ENCODE measurements at regions of chr1 and their contacts with region 1.

Region 1: DNA sequence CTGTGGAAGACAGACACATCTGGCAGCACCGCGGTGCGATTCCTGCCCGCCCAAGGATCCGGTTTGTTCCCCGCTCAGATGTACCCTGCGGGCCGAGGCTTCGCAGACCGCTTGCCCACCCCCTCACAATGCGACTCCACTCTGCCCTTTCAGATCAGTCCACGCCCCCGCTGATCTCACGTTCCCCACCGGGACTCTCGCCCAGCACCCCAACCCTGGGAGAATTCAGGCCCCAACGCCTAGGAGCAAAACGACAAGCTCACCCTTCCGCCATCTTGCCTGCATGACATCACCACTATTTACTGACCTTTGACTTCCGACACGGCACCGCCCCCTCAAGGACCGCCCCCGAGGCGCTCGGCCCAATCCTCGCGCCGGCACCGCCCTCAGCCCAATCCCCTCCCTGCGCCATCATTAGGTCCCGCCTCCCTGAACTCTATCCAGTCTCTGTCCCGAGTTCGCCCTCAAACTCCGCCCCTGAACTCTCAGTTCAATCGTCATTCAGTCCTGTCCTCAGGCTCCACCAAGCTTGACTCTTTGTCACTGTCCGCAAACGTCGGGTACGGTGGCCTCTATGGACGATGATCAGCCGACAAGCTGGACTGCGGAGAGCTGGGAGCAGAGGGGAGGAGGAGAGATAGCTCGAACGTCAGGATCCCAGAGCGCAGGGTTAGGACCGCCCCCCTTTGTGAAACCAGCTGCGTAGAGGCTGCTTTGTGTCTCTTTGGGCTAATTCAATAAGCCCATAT is at the start of gene BSDC1:
- DNase-seq: peak; percentile 98 to 99 (median 98)
- H3K4me3 ChIP-seq: peak within 1 kb of the TSS; percentile 84 to 94 (median 91)
- H3K4me3 Mint-ChIP-seq: peak within 1 kb of the TSS; percentile 98 to 100
- H3K27ac ChIP-seq: peak within 1 kb of the TSS; percentile 67 to 90
- H3K27ac Mint-ChIP-seq: peak within 1 kb of the TSS; percentile 99 to 100 (median 99)
- H3K4me1 ChIP-seq: peaks cover 24 to 32% of the 10 kb centered on the region in 2 donors
- H3K4me1 Mint-ChIP-seq: peaks cover 21% of the 10 kb centered on the region
- H3K27me3 ChIP-seq: no peaks in the 10 kb centered on the region
- H3K27me3 Mint-ChIP-seq: peaks cover 0 to 2% (median 0%) of the 10 kb centered on the region in 3 donors
- CTCF ChIP-seq: no peak
- polyA plus RNA-seq, gene BSDC1: 19.0 to 42.4 (median 23.7) TPM

Region 2: DNA sequence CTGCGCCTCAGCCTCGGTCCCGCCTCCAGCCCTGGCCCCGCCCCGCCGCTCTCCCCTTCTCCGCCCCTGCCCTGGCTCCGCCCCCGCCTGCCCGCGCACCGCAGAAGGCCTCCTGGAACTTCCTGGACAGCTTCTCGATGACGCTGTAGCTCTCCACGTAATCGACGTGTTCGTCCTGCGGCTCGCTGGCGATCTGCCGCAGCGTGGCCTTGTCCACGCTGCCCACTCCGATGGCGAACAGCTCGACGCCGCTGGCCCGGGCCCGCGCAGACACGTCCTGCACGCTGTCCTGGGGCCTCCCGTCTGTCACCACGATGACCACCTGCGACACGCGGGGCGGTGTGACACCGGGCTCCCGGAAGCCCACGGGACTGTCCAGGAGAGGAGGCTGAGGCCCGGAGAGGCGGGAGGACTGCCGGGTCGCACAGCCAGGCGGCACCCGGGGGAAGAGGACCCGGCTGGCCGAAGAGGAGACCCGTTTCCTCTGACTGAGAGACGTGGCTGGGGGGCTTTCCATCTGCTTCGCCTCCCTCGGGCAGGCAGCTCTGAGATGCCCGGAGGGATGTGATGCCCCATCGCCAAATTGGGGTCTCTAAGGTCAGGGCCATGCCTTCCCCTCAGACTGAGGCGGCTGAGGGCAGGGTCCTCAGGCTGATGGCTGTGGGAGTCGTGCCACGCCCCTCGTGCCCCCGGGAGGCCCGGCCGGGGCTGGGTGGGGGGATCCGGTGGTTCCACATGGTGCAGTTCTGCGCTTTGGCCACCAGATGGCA is 1675.5 kb before region 1 on chr1:
- intact Hi-C with region 1: loop called in 1 of 2 experiments (anchors 10 kb)
- DNase-seq: peak; percentile 97 to 99 (median 98)
- H3K4me3 ChIP-seq: peak overlapping the region; percentile 0 to 69 (median 49)
- H3K4me3 Mint-ChIP-seq: peak overlapping the region; percentile 39 to 58
- H3K27ac ChIP-seq: peak overlapping the region; percentile 95 to 97
- H3K27ac Mint-ChIP-seq: peak overlapping the region; percentile 87 to 97 (median 93)
- H3K4me1 ChIP-seq: peaks cover 27 to 33% of the 10 kb centered on the region in 2 donors
- H3K4me1 Mint-ChIP-seq: peaks cover 24% of the 10 kb centered on the region
- H3K27me3 ChIP-seq: no peaks in the 10 kb centered on the region
- H3K27me3 Mint-ChIP-seq: peaks cover 0 to 3% (median 2%) of the 10 kb centered on the region in 3 donors
- CTCF ChIP-seq: peak; percentile 100

Region 3: GRCh38 chr1:32221980-32222755 is 172.1 kb before region 1 on chr1 and contains the starts of genes EIF3I and TMEM234:
- intact Hi-C with region 1: loop called in 1 of 2 experiments (anchors 10 kb)
- DNase-seq: peak; percentile 91 to 96 (median 96)
- H3K4me3 ChIP-seq: peak within 1 kb of the TSS; percentile 53 to 98 (median 82)
- H3K4me3 Mint-ChIP-seq: peak within 1 kb of the TSS; percentile 97 to 98
- H3K27ac ChIP-seq: peak within 1 kb of the TSS; percentile 65 to 99
- H3K27ac Mint-ChIP-seq: peak within 1 kb of the TSS; percentile 97 to 100 (median 98)
- H3K4me1 ChIP-seq: peaks cover 18 to 28% of the 10 kb centered on the region in 2 donors
- H3K4me1 Mint-ChIP-seq: peaks cover 28% of the 10 kb centered on the region
- H3K27me3 ChIP-seq: no peaks in the 10 kb centered on the region
- H3K27me3 Mint-ChIP-seq: peaks cover 0 to 2% (median 2%) of the 10 kb centered on the region in 3 donors
- CTCF ChIP-seq: no peak
- polyA plus RNA-seq, gene EIF3I: 126 to 162 (median 151) TPM
- polyA plus RNA-seq, gene TMEM234: 12.8 to 22.0 (median 14.5) TPM

Region 4: GRCh38 chr1:32335790-32336590 is 58.3 kb before region 1 on chr1 and contains the start of gene MARCKSL1:
- intact Hi-C with region 1: loop called in 1 of 2 experiments (anchors 5 kb)
- DNase-seq: peak; percentile 63 to 70 (median 64)
- H3K4me3 ChIP-seq: peak within 1 kb of the TSS; percentile 23 to 76 (median 70)
- H3K4me3 Mint-ChIP-seq: peak within 1 kb of the TSS; percentile 86 to 93
- H3K27ac ChIP-seq: peak within 1 kb of the TSS; percentile 94 to 100
- H3K27ac Mint-ChIP-seq: peak within 1 kb of the TSS; percentile 95 to 99 (median 99)
- H3K4me1 ChIP-seq: peaks cover 51 to 66% of the 10 kb centered on the region in 2 donors
- H3K4me1 Mint-ChIP-seq: peaks cover 54% of the 10 kb centered on the region
- H3K27me3 ChIP-seq: peaks cover 7 to 15% of the 10 kb centered on the region in 2 donors
- H3K27me3 Mint-ChIP-seq: peaks cover 24 to 27% (median 24%) of the 10 kb centered on the region in 3 donors
- CTCF ChIP-seq: no peak
- polyA plus RNA-seq, gene MARCKSL1: 13.9 to 150 (median 40.3) TPM

Region 5: DNA sequence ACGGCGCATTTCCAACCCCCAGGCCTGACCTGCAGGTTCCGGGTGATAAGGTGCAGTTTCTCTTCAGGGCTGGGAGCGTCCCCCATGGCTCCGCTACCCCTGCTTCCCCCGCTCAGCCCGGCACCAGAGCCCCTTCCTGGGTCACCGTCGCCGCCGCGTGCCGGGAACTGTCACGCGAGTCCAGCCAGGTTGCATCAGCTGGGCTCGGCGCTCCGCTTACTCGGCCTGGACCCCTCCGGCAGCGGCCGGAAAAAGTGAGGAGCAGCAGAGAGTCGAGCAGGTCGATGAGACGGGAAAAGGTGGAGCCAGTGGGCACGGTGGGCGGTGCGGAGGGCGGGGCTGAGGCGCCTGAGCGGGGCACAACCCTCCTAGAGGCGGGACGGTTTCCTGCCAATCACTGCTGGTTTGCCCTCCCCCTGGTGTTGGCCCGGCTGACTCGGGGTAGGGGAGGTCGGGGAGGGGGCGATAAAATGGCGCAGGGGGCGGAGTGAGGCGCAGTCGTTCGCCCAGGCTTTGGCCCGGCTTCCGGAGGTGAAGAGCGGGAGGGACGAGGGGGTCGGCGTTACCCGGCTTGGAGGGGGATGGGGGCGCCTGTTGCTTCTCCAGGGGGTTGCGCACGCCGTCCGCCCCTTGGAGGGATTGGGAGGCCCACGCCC is 423.0 kb after region 1 on chr1 and contains the starts of genes S100PBP and YARS1:
- intact Hi-C with region 1: loop called in 1 of 2 experiments (anchors 5 kb)
- DNase-seq: peak; percentile 98 to 99 (median 98)
- H3K4me3 ChIP-seq: peak within 1 kb of the TSS; percentile 79 to 100 (median 97)
- H3K4me3 Mint-ChIP-seq: peak within 1 kb of the TSS; percentile 92 to 99
- H3K27ac ChIP-seq: peak within 1 kb of the TSS; percentile 93 to 99
- H3K27ac Mint-ChIP-seq: peak within 1 kb of the TSS; percentile 95 to 98 (median 98)
- H3K4me1 ChIP-seq: peaks cover 30 to 46% of the 10 kb centered on the region in 2 donors
- H3K4me1 Mint-ChIP-seq: peaks cover 44% of the 10 kb centered on the region
- H3K27me3 ChIP-seq: no peaks in the 10 kb centered on the region
- H3K27me3 Mint-ChIP-seq: peaks cover 0 to 2% (median 1%) of the 10 kb centered on the region in 3 donors
- CTCF ChIP-seq: no peak
- polyA plus RNA-seq, gene S100PBP: 6.6 to 17.4 (median 7.1) TPM
- polyA plus RNA-seq, gene YARS1: 38.1 to 42.7 (median 39.8) TPM